Activated naive CD4-positive, alpha-beta T cell treated with anti-CD3 and anti-CD28 coated beads for 36 hours (primary cell): ENCODE measurements at regions of chr12 and their contacts with region 1.

Region 1: DNA sequence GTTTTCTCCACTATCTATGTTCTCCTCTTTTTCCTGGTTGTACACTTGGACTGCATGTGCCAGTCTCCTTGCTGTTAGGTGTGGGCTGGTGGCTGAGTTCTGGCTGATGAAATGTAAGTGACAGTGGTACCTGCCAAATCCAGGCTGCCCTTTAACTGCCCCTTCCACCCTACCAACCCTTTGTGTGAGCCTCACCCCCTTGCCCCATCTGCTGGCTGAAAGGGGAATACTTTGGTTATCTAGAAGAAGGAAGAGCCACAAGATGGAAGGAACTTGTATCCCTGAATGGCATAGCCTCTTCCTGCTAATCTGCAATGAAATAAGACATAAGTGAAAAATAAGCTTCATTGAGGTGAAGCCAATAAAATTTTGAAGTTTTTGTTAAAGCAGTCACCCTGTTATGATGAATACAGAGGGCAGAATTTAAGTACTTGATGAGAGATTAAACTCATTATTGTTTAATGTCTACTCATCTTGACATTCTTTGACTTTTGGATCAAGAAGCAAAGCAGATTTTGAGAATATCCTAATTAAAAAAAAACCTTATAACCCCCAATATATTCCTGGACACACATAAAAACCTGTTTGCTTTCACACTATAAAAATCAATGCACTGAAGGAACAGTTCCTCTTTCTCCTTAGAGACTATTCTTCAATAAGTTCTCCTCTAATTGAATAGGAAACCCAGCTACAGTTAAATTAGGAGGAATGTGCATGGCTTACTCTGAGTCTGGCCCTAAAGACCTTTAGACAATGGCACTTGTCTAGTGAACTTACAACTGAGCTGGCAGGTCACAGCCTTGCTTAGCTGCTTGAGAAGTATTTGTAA is 262.6 kb upstream of the BTG1 start:
- DNase-seq: peak; percentile 79
- H3K4me3 Mint-ChIP-seq: no peak overlapping the region
- H3K27ac Mint-ChIP-seq: peak overlapping the region; percentile 71
- H3K4me1 Mint-ChIP-seq: peaks cover 64% of the 10 kb centered on the region
- H3K27me3 Mint-ChIP-seq: no peaks in the 10 kb centered on the region

Region 2: GRCh38 chr12:91382081-91382543 is 1026.2 kb before region 1 on chr12:
- CTCF ChIA-PET with region 1: interaction called, 7 read pairs
- intact Hi-C with region 1: loop called (anchors 5 kb)
- DNase-seq: peak; percentile 92
- H3K4me3 Mint-ChIP-seq: peak overlapping the region; percentile 76
- H3K27ac Mint-ChIP-seq: no peak overlapping the region
- H3K4me1 Mint-ChIP-seq: peaks cover 5% of the 10 kb centered on the region
- H3K27me3 Mint-ChIP-seq: no peaks in the 10 kb centered on the region

Region 3: GRCh38 chr12:91460469-91460868 is 947.8 kb before region 1 on chr12:
- CTCF ChIA-PET with region 1: no interaction called
- intact Hi-C with region 1: no loop called
- DNase-seq: no peak
- H3K4me3 Mint-ChIP-seq: no peak overlapping the region
- H3K27ac Mint-ChIP-seq: no peak overlapping the region
- H3K4me1 Mint-ChIP-seq: no peaks in the 10 kb centered on the region
- H3K27me3 Mint-ChIP-seq: no peaks in the 10 kb centered on the region

Region 4: DNA sequence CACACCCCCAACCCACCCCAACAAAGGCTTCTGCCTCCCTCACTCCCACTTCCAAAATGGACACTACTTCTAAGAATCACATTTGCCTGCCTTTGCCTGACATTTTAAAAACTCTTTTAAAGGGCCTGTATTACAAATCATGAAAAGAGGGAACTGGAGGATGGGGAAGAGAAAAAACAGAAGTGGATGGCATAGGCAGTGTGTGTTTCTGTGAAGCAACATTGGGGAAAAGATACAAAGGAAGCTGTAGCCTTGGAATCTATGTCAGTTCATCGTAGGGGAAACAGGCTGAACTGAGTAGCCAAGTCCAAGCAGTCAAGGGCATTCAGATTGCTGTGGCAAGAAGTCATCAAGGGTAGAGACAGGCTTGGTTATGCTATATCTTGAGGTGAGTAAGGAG is 536.5 kb before region 1 on chr12:
- CTCF ChIA-PET with region 1: interaction called, 3 read pairs
- intact Hi-C with region 1: loop called (anchors 5 kb)
- DNase-seq: no peak
- H3K4me3 Mint-ChIP-seq: no peak overlapping the region
- H3K27ac Mint-ChIP-seq: peak overlapping the region; percentile 65
- H3K4me1 Mint-ChIP-seq: peaks cover 47% of the 10 kb centered on the region
- H3K27me3 Mint-ChIP-seq: no peaks in the 10 kb centered on the region

Region 5: DNA sequence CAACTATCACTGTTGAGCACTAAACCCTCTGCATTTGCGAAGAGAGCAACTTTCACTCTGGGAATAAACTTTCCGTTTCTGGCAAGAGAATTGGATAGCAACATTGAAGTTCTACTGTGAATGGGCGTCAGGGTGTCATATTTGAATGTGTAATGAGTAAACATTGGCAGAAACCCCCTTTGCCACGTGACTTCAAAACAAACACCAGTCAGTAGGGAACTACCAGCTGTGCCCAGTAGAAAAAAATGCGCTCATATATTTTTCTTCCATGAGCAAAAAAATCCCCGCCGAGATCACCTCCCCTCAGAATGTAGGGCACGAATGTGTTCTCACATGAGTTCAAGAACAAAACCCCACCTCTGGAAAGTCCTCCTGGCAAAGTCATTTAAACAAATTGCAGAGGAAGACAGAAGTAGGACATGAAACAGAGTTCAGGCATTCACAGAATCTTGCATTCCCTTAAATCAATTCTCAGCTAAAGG is 343.2 kb before region 1 on chr12:
- CTCF ChIA-PET with region 1: no interaction called
- intact Hi-C with region 1: loop called (anchors 1 kb)
- DNase-seq: peak; percentile 86
- H3K4me3 Mint-ChIP-seq: peak overlapping the region; percentile 22
- H3K27ac Mint-ChIP-seq: peak overlapping the region; percentile 84
- H3K4me1 Mint-ChIP-seq: peaks cover 65% of the 10 kb centered on the region
- H3K27me3 Mint-ChIP-seq: no peaks in the 10 kb centered on the region

Region 6: GRCh38 chr12:92208613-92209121 is 199.6 kb before region 1 on chr12:
- CTCF ChIA-PET with region 1: interaction called, 5 read pairs
- intact Hi-C with region 1: loop called (anchors 2 kb)
- DNase-seq: peak; percentile 42
- H3K4me3 Mint-ChIP-seq: peak overlapping the region; percentile 66
- H3K27ac Mint-ChIP-seq: peak overlapping the region; percentile 86
- H3K4me1 Mint-ChIP-seq: peaks cover 45% of the 10 kb centered on the region
- H3K27me3 Mint-ChIP-seq: no peaks in the 10 kb centered on the region

Region 7: GRCh38 chr12:92469837-92470236 is 61.6 kb after region 1 on chr12:
- CTCF ChIA-PET with region 1: no interaction called
- intact Hi-C with region 1: loop called (anchors 1 kb)
- DNase-seq: no peak
- H3K4me3 Mint-ChIP-seq: no peak overlapping the region
- H3K27ac Mint-ChIP-seq: peak overlapping the region; percentile 89
- H3K4me1 Mint-ChIP-seq: peaks cover 49% of the 10 kb centered on the region
- H3K27me3 Mint-ChIP-seq: no peaks in the 10 kb centered on the region

Region 8: DNA sequence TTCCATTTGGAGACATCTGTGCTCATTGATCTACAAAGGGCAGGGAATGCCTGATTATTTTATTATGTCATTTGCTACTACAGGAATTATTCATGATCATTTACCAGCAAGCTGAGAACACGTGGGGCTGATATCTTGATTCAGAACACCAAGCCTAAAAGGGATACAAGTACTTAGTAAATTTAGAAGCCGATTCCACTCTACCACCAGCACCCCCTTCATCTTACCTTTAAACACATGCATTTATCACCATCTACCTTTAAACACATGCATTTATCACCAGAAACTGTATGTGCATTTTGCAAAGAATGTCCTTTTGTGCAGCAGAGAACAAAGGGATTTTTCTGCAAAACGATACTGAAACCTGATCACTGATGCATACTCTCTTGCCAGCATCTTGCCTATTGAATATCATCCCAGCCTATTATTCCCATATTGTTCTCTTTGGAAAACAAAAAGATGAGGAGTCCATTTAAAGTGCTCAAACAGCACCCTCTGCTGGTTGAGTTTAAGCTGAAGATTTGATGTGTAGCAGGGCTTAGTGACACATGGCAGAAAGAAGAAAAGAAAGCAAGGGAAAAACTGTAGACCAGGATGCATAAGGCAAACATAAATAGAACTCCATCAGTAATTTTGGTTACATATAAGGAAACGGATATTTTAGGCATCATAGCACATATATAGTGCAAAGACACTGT is 161.9 kb after region 1 on chr12:
- CTCF ChIA-PET with region 1: interaction called, 3 read pairs
- intact Hi-C with region 1: loop called (anchors 1 kb)
- DNase-seq: peak; percentile 67
- H3K4me3 Mint-ChIP-seq: no peak overlapping the region
- H3K27ac Mint-ChIP-seq: no peak overlapping the region
- H3K4me1 Mint-ChIP-seq: peaks cover 32% of the 10 kb centered on the region
- H3K27me3 Mint-ChIP-seq: no peaks in the 10 kb centered on the region